ENCODE measurements at regions of chr2 and their contacts with region 1.

Region 1: DNA sequence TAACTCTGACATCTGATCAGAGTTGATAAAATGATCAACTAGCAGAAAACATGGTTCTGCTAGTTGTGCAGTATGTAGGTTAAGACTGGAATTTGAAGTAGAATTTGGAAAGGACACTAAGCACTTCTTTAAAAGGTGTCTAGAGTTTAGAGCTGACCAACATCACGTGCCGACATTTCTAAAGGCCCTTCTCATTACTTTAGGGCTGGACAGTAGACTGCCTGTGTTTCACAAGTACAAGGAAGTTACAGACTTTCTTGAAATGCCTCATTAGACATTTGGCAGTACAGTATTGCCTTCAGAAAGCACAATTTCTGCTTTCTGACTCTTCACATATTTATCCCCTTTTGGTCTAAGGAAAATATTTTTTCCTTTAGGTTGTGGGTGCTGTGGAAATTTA is 255.3 kb downstream of the ZNF385B start:
- DNase-seq: no peak
- ATAC-seq: no peak
- H3K4me3 ChIP-seq: no peak overlapping the region
- H3K27ac ChIP-seq: no peak overlapping the region
- H3K4me1 ChIP-seq: no peaks in the 10 kb centered on the region
- H3K27me3 ChIP-seq: no peaks in the 10 kb centered on the region
- CTCF ChIP-seq: no peak

Region 2: GRCh38 chr2:179636995-179637394 is 30.9 kb after region 1 on chr2:
- CTCF ChIA-PET with region 1: no interaction called
- POLR2A ChIA-PET with region 1: interaction called, 10 read pairs
- intact Hi-C with region 1: no loop called
- DNase-seq: no peak
- ATAC-seq: no peak
- H3K4me3 ChIP-seq: no peak overlapping the region
- H3K27ac ChIP-seq: no peak overlapping the region
- H3K4me1 ChIP-seq: no peaks in the 10 kb centered on the region
- H3K27me3 ChIP-seq: no peaks in the 10 kb centered on the region
- CTCF ChIP-seq: no peak